ENCODE measurements at regions of chr10 and their contacts with region 1.

Region 1: DNA sequence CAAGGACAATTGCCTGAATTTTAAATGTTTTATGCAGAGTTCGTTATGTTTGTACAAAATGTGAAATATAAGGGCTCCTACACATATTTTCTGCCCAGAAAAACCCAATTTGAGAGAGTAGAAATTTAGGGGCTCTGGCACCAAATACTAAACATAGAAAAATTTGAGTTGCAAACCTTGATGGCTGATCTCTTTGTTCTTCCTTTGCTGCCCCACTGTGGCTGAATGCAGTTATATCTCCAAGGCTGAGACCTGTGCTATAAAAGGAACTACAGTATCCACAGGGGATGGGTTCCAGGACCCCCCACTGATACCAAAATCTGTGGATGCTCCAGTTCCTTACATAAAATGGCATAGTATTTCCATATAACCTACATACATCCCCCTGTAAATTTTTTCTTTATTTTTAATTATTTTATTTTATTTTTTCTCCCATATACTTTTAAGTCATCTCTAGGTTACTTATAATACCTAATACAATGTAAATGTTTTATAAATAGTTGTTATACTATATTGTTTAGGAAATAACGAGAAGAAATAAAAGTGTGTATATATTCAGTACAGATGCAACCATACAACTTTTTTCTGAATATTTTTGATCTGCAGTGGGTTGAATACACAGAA is 22.5 kb downstream of the CFAP43 start:
- DNase-seq: no peak

Region 2: GRCh38 chr10:104045151-104046089 is 164.3 kb before region 1 on chr10:
- intact Hi-C with region 1: loop called (anchors 2 kb)
- DNase-seq: no peak

Measured in cardiac septum (tissue), 1 donor.